Gastrocnemius medialis (tissue), 4 donors: ENCODE measurements at regions of chr18 and their contacts with region 1.

Region 1: GRCh38 chr18:64276311-64277090 is 127.6 kb upstream of the LINC00305 start:
- DNase-seq: no peak
- ATAC-seq: no peak
- H3K4me3 ChIP-seq: no peak overlapping the region
- H3K27ac ChIP-seq: no peak overlapping the region
- H3K4me1 ChIP-seq: no peaks in the 10 kb centered on the region
- H3K27me3 ChIP-seq: no peaks in the 10 kb centered on the region
- CTCF ChIP-seq: no peak
- POLR2A ChIP-seq: no peak

Region 2: DNA sequence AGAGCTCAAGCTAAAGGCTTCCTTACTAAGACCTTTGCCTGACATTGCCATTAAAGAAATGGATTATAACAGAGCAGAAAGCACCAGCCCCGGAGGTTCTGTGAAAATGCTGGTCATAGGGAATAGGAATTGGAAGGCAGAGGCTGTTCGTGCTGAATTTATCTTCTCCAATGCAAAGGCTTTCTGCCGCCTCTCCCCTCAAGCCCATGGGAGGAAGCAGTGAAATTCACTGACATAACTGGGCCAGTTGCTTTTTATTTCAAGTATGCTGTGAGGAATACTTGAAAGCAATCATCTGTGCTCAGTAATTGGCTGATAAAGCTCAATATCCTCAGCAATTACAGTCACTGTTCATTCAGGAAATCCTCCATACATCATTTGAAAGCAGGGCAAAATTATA is 42.2 kb before region 1 on chr18:
- in situ Hi-C with region 1: no loop called
- intact Hi-C with region 1: no loop called
- DNase-seq: no peak
- ATAC-seq: no peak
- H3K4me3 ChIP-seq: no peak overlapping the region
- H3K27ac ChIP-seq: no peak overlapping the region
- H3K4me1 ChIP-seq: no peaks in the 10 kb centered on the region
- H3K27me3 ChIP-seq: no peaks in the 10 kb centered on the region
- CTCF ChIP-seq: no peak
- POLR2A ChIP-seq: no peak

Region 3: GRCh38 chr18:64380117-64380516 is 103.6 kb after region 1 on chr18:
- in situ Hi-C with region 1: loop called in 1 of 4 experiments (anchors 25 kb)
- intact Hi-C with region 1: no loop called
- DNase-seq: no peak
- ATAC-seq: no peak
- H3K4me3 ChIP-seq: no peak overlapping the region
- H3K27ac ChIP-seq: no peak overlapping the region
- H3K4me1 ChIP-seq: no peaks in the 10 kb centered on the region
- H3K27me3 ChIP-seq: no peaks in the 10 kb centered on the region
- CTCF ChIP-seq: no peak
- POLR2A ChIP-seq: no peak